ENCODE measurements at regions of chr1 and their contacts with region 1.

Region 1: GRCh38 chr1:88998716-88999115 is 6.3 kb upstream of the KYAT3 start:
- DNase-seq: no peak

Region 2: DNA sequence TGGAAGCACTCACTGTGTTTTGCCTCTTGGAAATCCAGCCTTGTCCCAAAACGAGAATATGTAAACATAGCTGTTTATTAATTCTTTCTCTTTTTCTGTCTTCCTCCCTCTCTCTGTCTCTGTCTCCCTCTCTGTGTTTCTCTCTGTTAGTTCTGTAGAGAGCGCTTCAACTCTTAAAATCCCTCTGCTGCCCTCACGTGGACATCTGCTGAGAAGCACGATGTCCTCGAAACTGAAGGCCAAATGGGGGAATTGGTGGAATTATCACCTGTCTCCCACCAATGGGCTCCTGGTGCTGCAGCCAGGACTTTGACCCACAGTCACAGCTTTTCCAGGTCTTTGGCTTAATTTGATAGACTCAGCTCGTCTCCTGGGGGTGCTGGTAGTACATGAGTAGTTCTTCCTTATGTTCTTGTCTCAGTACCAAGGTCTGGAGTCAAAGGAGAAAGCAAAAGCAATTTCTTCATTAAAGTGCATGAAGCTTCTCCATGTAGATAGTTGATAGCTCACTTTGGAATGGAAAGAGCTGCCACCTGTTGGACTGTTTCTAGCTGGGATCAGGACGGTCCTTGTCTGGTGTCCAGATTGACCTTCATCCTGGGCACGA is 359.7 kb after region 1 on chr1:
- intact Hi-C with region 1: loop called (anchors 2 kb)
- DNase-seq: peak; percentile 81

Region 3: DNA sequence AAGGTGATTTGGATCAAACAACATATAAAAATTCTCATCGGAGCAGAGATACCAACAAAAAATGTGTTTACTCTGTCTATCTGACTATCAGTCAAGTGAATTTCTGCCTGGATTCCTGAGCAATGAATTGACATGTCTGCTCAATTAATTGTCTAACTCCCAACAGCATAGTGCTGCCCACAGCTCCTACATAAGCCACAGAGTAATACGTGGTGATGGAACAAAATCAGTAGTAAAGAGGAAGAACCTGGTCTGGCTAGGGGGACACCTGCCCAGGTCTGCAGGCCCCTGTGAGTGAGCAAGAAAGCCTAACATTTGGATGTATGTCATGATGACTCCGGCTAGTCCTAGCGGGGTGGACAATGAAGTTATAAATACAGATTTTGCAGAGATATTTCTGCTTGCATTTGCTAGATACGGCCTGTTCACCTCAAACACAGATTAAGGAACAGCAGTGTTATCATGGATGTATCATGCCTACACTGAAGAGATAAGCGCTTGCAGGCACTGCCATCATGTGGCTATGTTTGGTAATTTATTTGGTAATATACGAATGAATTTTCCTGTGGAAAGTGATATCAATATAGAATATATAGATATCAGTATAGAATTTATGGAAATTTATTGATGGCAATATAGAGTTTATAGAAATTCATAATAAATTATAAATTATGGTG is 456.3 kb after region 1 on chr1:
- intact Hi-C with region 1: loop called (anchors 5 kb)
- DNase-seq: no peak